IMR-90 (cell line): ENCODE measurements at regions of chr5 and their contacts with region 1.

Region 1: GRCh38 chr5:16886366-16886736 is 49.7 kb downstream of the MYO10 start:
- DNase-seq: peak; percentile 90
- ATAC-seq: peak; percentile 49
- H3K4me3 ChIP-seq: no peak overlapping the region
- H3K27ac ChIP-seq: peak overlapping the region; percentile 2; the same call in 1 of the 2 replicates
- H3K4me1 ChIP-seq: peaks cover 35% of the 10 kb centered on the region
- H3K27me3 ChIP-seq: no peaks in the 10 kb centered on the region
- CTCF ChIP-seq: no peak
- POLR2A ChIP-seq: no peak
- RAD21 ChIP-seq: peak; percentile 13; the same call in 1 of the 2 replicates

Region 2: GRCh38 chr5:16812911-16813310 is 73.4 kb before region 1 on chr5:
- CTCF ChIA-PET with region 1: interaction called, 3 read pairs
- POLR2A ChIA-PET with region 1: interaction called, 11 read pairs
- dilution Hi-C with region 1: no loop called
- in situ Hi-C with region 1: no loop called
- intact Hi-C with region 1: no loop called
- DNase-seq: peak; percentile 61
- ATAC-seq: no peak
- H3K4me3 ChIP-seq: no peak overlapping the region
- H3K27ac ChIP-seq: no peak overlapping the region
- H3K4me1 ChIP-seq: peaks cover 19% of the 10 kb centered on the region
- H3K27me3 ChIP-seq: no peaks in the 10 kb centered on the region
- CTCF ChIP-seq: 0 out of 2 replicates have a peak, but pooled peaks have one; percentile 7
- POLR2A ChIP-seq: no peak
- RAD21 ChIP-seq: no peak

Region 3: GRCh38 chr5:16975950-16976624 is 89.7 kb after region 1 on chr5:
- CTCF ChIA-PET with region 1: no interaction called
- POLR2A ChIA-PET with region 1: no interaction called
- dilution Hi-C with region 1: no loop called
- in situ Hi-C with region 1: no loop called
- intact Hi-C with region 1: no loop called
- DNase-seq: no peak
- ATAC-seq: no peak
- H3K4me3 ChIP-seq: no peak overlapping the region
- H3K27ac ChIP-seq: no peak overlapping the region
- H3K4me1 ChIP-seq: no peaks in the 10 kb centered on the region
- H3K27me3 ChIP-seq: no peaks in the 10 kb centered on the region
- CTCF ChIP-seq: no peak
- POLR2A ChIP-seq: no peak
- RAD21 ChIP-seq: no peak